ENCODE measurements at regions of chr3 and their contacts with region 1.

Region 1: GRCh38 chr3:171088964-171089754 is 62.6 kb upstream of the SLC2A2 start:
- DNase-seq: no peak
- ATAC-seq: peak; percentile 72

Region 2: GRCh38 chr3:172749221-172749965 is 1660.2 kb after region 1 on chr3:
- intact Hi-C with region 1: loop called (anchors 5 kb)
- DNase-seq: no peak
- ATAC-seq: peak; percentile 47